HCT116 (cell line): ENCODE measurements at regions of chr12 and their contacts with region 1.

Region 1: GRCh38 chr12:30695199-30696103 is at the start of gene IPO8:
- DNase-seq: peak; percentile 87
- ATAC-seq: peak; percentile 84
- H3K4me3 ChIP-seq: peak within 1 kb of the TSS; percentile 88 to 98
- H3K27ac ChIP-seq: peak within 1 kb of the TSS; percentile 70
- H3K4me1 ChIP-seq: peaks cover 12 to 32% of the 10 kb centered on the region in 2 experiments; a peak in 3 of 4 replicates
- H3K27me3 ChIP-seq: no peaks in the 10 kb centered on the region
- CTCF ChIP-seq: peak in 2 of 3 experiments; percentile 29; a peak in 3 of 6 replicates
- POLR2A ChIP-seq: no peak
- RAD21 ChIP-seq: no peak
- total RNA-seq, gene IPO8: 41.4 TPM

Region 2: GRCh38 chr12:30795410-30796312 is 100.2 kb after region 1 on chr12:
- CTCF ChIA-PET with region 1: no interaction called
- POLR2A ChIA-PET with region 1: interaction called, 5 read pairs
- RAD21 ChIA-PET with region 1: interaction called in 1 of 2 experiments, 3 read pairs
- intact Hi-C with region 1: loop called (anchors 5 kb)
- DNase-seq: peak; percentile 64
- ATAC-seq: peak; percentile 67
- H3K4me3 ChIP-seq: peak overlapping the region; percentile 75 to 76
- H3K27ac ChIP-seq: peak overlapping the region; percentile 99
- H3K4me1 ChIP-seq: peaks cover 30 to 61% of the 10 kb centered on the region in 2 experiments
- H3K27me3 ChIP-seq: no peaks in the 10 kb centered on the region
- CTCF ChIP-seq: no peak
- POLR2A ChIP-seq: peak; percentile 43
- RAD21 ChIP-seq: no peak